IMR-90 (cell line): ENCODE measurements at regions of chrX and their contacts with region 1.

Region 1: GRCh38 chrX:20530406-20530921 is 263.8 kb upstream of the RPS6KA3 start:
- DNase-seq: peak; percentile 64
- ATAC-seq: peak; percentile 79
- H3K4me3 ChIP-seq: peak overlapping the region; percentile 19; the same call in 1 of the 2 replicates
- H3K27ac ChIP-seq: no peak overlapping the region
- H3K4me1 ChIP-seq: peaks cover 4% of the 10 kb centered on the region; the same call in 1 of the 2 replicates
- H3K27me3 ChIP-seq: peaks cover 7% of the 10 kb centered on the region
- CTCF ChIP-seq: peak; percentile 72
- POLR2A ChIP-seq: no peak
- RAD21 ChIP-seq: peak; percentile 72

Region 2: GRCh38 chrX:20594985-20595384 is 64.5 kb after region 1 on chrX:
- CTCF ChIA-PET with region 1: no interaction called
- POLR2A ChIA-PET with region 1: no interaction called
- dilution Hi-C with region 1: no loop called
- in situ Hi-C with region 1: no loop called
- intact Hi-C with region 1: no loop called
- DNase-seq: no peak
- ATAC-seq: no peak
- H3K4me3 ChIP-seq: no peak overlapping the region
- H3K27ac ChIP-seq: no peak overlapping the region
- H3K4me1 ChIP-seq: no peaks in the 10 kb centered on the region
- H3K27me3 ChIP-seq: no peaks in the 10 kb centered on the region
- CTCF ChIP-seq: 0 out of 2 replicates have a peak, but pooled peaks have one; percentile 14
- POLR2A ChIP-seq: no peak
- RAD21 ChIP-seq: no peak

Region 3: GRCh38 chrX:21479695-21480270 is 949.3 kb after region 1 on chrX:
- CTCF ChIA-PET with region 1: interaction called, 11 read pairs
- POLR2A ChIA-PET with region 1: no interaction called
- dilution Hi-C with region 1: no loop called
- in situ Hi-C with region 1: loop called (anchors 25 kb)
- intact Hi-C with region 1: loop called (anchors 1 kb)
- DNase-seq: peak; percentile 54
- ATAC-seq: peak; percentile 84
- H3K4me3 ChIP-seq: no peak overlapping the region
- H3K27ac ChIP-seq: no peak overlapping the region
- H3K4me1 ChIP-seq: no peaks in the 10 kb centered on the region
- H3K27me3 ChIP-seq: no peaks in the 10 kb centered on the region
- CTCF ChIP-seq: peak; percentile 69
- POLR2A ChIP-seq: no peak
- RAD21 ChIP-seq: peak; percentile 71

Region 4: GRCh38 chrX:21738210-21738949 is 1207.9 kb after region 1 on chrX:
- CTCF ChIA-PET with region 1: no interaction called
- POLR2A ChIA-PET with region 1: no interaction called
- dilution Hi-C with region 1: no loop called
- in situ Hi-C with region 1: loop called (anchors 10 kb)
- intact Hi-C with region 1: no loop called
- DNase-seq: no peak
- ATAC-seq: no peak
- H3K4me3 ChIP-seq: no peak overlapping the region
- H3K27ac ChIP-seq: no peak overlapping the region
- H3K4me1 ChIP-seq: no peaks in the 10 kb centered on the region
- H3K27me3 ChIP-seq: peaks cover 5% of the 10 kb centered on the region; the same call in 1 of the 2 replicates
- CTCF ChIP-seq: no peak
- POLR2A ChIP-seq: no peak
- RAD21 ChIP-seq: no peak

Region 5: DNA sequence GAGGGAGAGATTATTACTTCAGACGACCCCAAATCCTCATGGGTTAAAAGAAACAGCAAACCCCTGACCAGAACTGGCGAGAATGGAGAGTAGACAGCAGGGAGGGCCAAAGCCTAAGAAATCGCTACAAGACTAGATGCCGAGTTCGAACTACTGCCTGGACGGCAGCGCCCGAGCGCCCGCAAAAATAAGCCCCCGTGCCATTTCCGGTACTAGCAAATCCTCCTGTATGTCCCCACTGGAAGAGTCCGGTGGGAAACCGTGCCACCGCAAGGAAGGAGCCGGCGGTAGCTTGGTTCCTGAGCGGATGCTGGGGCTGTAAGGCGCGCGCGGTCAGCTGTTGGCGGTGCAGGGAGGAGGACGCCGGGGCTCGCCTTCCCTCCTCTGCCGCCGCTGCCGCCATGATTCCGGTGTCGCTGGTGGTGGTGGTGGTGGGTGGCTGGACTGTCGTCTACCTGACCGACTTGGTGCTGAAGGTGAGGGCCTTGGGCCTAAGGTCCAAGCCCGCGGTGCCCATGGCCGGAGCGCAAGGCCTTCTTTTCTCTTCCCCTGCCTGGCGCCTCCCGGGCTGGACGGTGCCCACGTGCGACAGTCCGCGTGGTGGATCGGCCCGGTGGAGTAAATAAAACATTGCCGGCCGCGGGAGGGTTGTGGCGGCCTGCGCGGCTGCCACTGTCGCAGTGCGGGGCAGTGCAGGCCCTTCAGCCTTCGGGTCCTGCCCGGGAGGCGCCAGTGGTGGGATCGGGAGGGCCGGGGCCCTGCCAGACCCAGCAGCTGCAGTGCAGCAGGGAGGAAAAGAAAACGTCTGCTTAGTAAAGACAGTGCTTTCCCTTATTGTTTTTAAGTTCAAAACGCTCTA is 1309.1 kb after region 1 on chrX and contains the start of gene MBTPS2:
- CTCF ChIA-PET with region 1: interaction called, 3 read pairs
- POLR2A ChIA-PET with region 1: no interaction called
- dilution Hi-C with region 1: no loop called
- in situ Hi-C with region 1: no loop called
- intact Hi-C with region 1: loop called (anchors 10 kb)
- DNase-seq: peak; percentile 91
- ATAC-seq: peak; percentile 93
- H3K4me3 ChIP-seq: peak within 1 kb of the TSS; percentile 84
- H3K27ac ChIP-seq: peak within 1 kb of the TSS; percentile 96
- H3K4me1 ChIP-seq: no peaks in the 10 kb centered on the region; the same call in 1 of the 2 replicates
- H3K27me3 ChIP-seq: no peaks in the 10 kb centered on the region
- CTCF ChIP-seq: peak; percentile 50
- POLR2A ChIP-seq: peak; percentile 81
- RAD21 ChIP-seq: peak; percentile 65
- total RNA-seq, gene MBTPS2: 4.7 and 6.9 TPM in 2 replicates